Calu3 (cell line): ENCODE measurements at regions of chr9 and their contacts with region 1.

Region 1: DNA sequence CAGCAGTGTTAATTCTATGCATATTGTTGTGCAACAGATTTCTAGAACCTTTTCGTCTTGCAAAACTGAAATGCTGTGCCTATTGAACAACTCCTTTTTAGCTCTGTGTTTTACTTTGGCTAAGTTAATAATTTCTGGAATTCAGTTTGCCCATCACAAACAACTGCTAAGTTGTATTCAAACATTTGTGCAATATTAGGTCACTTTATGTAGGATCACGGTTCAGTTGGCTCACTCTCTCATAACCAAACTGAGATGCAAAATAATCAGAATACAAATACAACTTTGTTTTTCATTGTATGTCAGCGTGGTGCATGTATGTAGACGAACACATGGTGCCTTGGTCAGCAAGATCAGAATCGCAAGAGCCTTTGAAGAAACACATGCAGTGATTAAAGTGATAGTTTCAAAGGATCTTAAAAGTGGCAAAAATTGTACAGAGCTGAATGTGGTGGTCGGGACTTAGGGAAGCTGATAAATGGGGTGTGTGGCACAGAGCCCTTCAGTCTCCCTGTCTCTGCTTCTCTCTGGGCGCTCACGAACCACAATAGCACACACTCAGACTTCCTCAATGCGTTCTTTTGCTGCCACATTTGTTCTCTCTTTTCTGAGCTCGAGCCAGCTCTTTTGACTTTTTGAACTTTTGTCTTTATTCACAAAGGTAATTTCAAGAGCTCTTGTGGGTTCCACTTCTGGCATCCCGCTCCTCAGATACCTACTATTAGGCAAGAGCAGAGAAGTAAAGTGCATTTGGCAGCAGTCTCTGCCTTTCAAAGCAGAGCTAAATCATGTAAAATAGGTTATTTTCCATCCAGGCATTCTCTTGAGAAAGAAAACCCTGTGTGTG is 112.4 kb upstream of the CTSL start:
- DNase-seq: no peak
- H3K4me3 Mint-ChIP-seq: peak overlapping the region; percentile 39
- H3K27ac Mint-ChIP-seq: peak overlapping the region; percentile 86
- H3K4me1 Mint-ChIP-seq: peaks cover 56% of the 10 kb centered on the region
- H3K27me3 Mint-ChIP-seq: no peaks in the 10 kb centered on the region
- CTCF ChIP-seq: no peak

Region 2: DNA sequence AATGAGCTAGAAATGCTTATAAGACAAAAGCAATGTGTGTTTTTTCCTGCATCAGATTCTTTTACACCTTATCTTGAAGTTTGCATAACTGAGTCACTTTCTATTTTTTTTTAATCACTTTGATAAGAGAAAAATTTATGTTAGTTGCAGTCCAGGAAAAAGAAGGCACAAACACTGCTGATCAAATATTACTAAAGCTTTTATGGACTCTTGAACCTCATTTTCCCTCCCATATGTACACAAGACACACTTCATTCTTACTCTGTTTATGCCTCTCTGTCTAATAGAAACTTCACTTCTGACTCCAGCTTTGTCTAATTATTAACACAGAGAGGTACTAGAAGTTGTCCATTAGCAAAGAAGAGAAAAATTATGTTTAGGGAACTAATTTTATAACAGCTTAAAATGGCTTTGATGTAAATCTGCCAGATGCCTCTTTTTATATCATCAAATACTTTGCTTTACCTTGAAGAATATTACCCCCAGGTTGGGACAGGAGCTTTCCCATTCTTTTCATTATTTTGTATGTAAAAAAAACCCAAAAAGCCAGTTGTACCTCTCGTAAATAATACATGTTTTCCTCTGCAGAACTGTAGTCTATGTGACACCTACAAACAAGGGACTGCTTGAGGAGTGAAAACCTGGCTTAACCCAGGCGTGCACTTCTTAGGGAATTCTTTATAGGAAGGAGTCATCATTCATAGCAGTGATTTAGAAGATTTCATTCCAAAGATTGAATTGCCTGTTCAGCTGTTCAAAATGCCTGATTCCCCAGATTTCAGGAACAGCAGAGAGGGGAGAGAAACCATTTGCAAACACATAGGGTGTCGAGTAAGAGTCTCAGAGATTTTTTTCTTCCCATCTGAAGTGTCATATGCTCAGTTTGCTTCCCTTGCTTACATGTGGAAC is 43.2 kb before region 1 on chr9:
- CTCF ChIA-PET with region 1: interaction called, 5 read pairs
- intact Hi-C with region 1: loop called (anchors 5 kb)
- DNase-seq: no peak
- H3K4me3 Mint-ChIP-seq: peak overlapping the region; percentile 55
- H3K27ac Mint-ChIP-seq: peak overlapping the region; percentile 75
- H3K4me1 Mint-ChIP-seq: peaks cover 69% of the 10 kb centered on the region
- H3K27me3 Mint-ChIP-seq: no peaks in the 10 kb centered on the region
- CTCF ChIP-seq: no peak

Region 3: GRCh38 chr9:87763286-87763685 is 149.8 kb after region 1 on chr9:
- CTCF ChIA-PET with region 1: no interaction called
- intact Hi-C with region 1: no loop called
- DNase-seq: no peak
- H3K4me3 Mint-ChIP-seq: no peak overlapping the region
- H3K27ac Mint-ChIP-seq: no peak overlapping the region
- H3K4me1 Mint-ChIP-seq: peaks cover 9% of the 10 kb centered on the region
- H3K27me3 Mint-ChIP-seq: no peaks in the 10 kb centered on the region
- CTCF ChIP-seq: no peak

Region 4: DNA sequence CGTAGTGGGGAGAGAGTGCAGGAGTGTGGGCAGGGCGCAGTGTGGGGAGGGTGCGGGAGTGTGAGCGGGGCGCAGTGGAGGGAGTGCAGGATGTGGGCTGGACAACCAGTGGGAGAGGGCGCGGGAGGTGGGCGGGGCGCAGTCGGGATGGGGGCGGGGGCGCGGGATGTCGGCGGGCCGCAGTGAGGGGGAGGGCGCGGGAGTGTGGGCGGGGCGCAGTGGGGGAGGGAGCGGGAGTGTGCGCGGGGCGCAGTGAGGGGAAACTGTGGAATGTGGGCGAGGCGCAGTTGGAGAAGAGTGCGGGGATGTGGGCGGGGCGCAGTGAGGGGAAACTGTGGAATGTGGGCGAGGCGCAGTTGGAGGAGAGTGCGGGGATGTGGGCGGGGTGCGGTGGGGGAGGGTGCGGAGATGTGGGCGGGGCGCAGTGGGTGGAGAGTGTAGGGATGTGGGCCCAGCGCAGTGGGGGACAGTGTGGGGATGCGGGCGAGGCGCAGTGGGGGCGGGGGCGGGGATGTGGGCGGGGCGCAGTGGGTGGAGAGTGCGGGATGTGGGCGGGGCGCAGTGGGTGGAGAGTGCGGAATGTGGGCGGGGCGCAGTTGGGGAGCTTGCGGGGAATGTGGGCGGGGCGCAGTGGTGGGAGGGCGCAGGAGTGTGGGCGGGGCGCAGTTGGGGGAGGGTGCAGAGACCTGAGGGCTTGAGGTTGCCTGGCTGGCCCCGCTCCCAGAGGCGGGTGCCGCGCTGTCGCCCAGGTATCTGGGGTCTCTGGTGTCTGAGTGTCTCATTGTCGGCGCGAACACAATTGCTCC is 921.2 kb after region 1 on chr9 and contains the start of gene NXNL2:
- CTCF ChIA-PET with region 1: no interaction called
- intact Hi-C with region 1: no loop called
- DNase-seq: peak; percentile 89
- H3K4me3 Mint-ChIP-seq: peak within 1 kb of the TSS; percentile 85
- H3K27ac Mint-ChIP-seq: peak within 1 kb of the TSS; percentile 82
- H3K4me1 Mint-ChIP-seq: peaks cover 12% of the 10 kb centered on the region
- H3K27me3 Mint-ChIP-seq: no peaks in the 10 kb centered on the region
- CTCF ChIP-seq: no peak
- total RNA-seq, gene NXNL2: 1.4 TPM in 2 replicates